ENCODE measurements at regions of chr18 and their contacts with region 1.

Region 1: DNA sequence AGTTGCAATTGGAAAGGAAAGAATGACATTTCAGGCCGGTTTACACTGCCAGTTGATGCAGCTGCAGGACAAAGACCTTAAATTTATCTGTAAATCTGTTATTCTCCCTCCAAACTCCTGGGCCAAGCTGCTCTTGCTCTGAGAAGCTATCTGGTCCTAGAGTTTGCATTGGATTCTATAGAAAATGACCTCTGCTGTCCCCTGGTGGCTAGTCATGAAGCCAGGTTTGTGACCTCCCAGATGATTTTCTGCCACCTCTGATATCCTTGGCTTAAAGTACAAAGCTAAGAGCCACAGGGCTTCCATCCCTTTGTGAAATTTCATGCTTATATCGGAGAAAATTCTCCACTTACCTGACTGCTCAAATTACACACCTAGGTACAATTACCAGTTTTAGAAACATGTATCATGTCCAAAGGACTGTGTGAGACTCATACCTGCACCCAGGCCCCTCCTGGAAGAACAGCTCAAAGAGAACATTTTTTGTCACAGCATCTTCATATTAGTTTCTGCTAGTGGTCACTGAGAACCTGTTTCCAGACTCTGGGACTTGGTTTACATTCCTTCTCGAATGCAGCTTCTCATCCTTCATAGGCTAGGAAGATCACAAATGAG is 28.9 kb upstream of the IER3IP1 start:
- DNase-seq: peak; percentile 18 to 33
- ATAC-seq: peak; percentile 64 to 81; a peak in 5 of 6 replicates
- H3K4me3 ChIP-seq: no peak overlapping the region
- H3K27ac ChIP-seq: no peak overlapping the region
- H3K4me1 ChIP-seq: no peaks in the 10 kb centered on the region
- CTCF ChIP-seq: peak; percentile 65
- EP300 ChIP-seq: no peak
- POLR2A ChIP-seq: no peak
- RAD21 ChIP-seq: peak; percentile 58 to 60

Region 2: GRCh38 chr18:47050468-47050867 is 154.5 kb before region 1 on chr18:
- CTCF ChIA-PET with region 1: interaction called, 14 read pairs
- POLR2A ChIA-PET with region 1: no interaction called
- DNase-seq: peak in 1 of 2 experiments; percentile 50
- ATAC-seq: peak; percentile 56 to 62; a peak in 2 of 6 replicates
- H3K4me3 ChIP-seq: no peak overlapping the region
- H3K27ac ChIP-seq: no peak overlapping the region
- H3K4me1 ChIP-seq: no peaks in the 10 kb centered on the region
- CTCF ChIP-seq: peak; percentile 50
- EP300 ChIP-seq: no peak
- POLR2A ChIP-seq: no peak
- RAD21 ChIP-seq: peak; percentile 56 to 57

Region 3: GRCh38 chr18:47100214-47100831 is 104.7 kb before region 1 on chr18:
- CTCF ChIA-PET with region 1: interaction called, 36 read pairs
- POLR2A ChIA-PET with region 1: no interaction called
- DNase-seq: peak; percentile 22 to 31
- ATAC-seq: peak; percentile 77 to 86; a peak in 5 of 6 replicates
- H3K4me3 ChIP-seq: no peak overlapping the region
- H3K27ac ChIP-seq: no peak overlapping the region
- H3K4me1 ChIP-seq: no peaks in the 10 kb centered on the region
- CTCF ChIP-seq: peak; percentile 66
- EP300 ChIP-seq: no peak
- POLR2A ChIP-seq: no peak
- RAD21 ChIP-seq: peak; percentile 63 to 64

Region 4: GRCh38 chr18:47113796-47114540 is 91.0 kb before region 1 on chr18:
- CTCF ChIA-PET with region 1: interaction called, 16 read pairs
- POLR2A ChIA-PET with region 1: no interaction called
- DNase-seq: no peak
- ATAC-seq: no peak
- H3K4me3 ChIP-seq: no peak overlapping the region
- H3K27ac ChIP-seq: no peak overlapping the region
- H3K4me1 ChIP-seq: no peaks in the 10 kb centered on the region
- CTCF ChIP-seq: no peak
- EP300 ChIP-seq: no peak
- POLR2A ChIP-seq: no peak
- RAD21 ChIP-seq: no peak

Region 5: DNA sequence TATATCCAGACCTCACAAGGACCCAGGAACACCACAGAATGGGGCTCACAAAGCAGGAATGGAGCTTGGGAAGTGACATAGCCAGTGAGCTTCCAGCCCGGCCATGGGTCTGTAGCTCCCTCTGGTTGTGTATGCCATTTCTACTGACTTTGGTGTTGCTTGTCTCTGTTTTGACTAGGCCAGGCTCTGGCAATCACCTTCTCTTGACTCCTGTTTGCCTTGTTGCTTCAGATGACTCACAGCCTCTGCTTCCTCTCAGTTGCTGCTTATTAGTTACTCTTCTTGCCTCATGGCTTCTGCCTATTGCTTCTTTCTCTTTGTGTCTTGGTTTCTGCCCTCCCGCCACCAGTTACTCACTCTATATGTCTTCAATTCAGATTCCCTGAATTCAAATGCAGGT is 13.1 kb before region 1 on chr18:
- CTCF ChIA-PET with region 1: interaction called, 11 read pairs
- POLR2A ChIA-PET with region 1: no interaction called
- DNase-seq: peak in 1 of 2 experiments; percentile 24
- ATAC-seq: peak in 1 of 2 experiments; percentile 30; a peak in 5 of 6 replicates
- H3K4me3 ChIP-seq: no peak overlapping the region
- H3K27ac ChIP-seq: no peak overlapping the region
- H3K4me1 ChIP-seq: no peaks in the 10 kb centered on the region
- CTCF ChIP-seq: no peak
- EP300 ChIP-seq: no peak
- POLR2A ChIP-seq: no peak
- RAD21 ChIP-seq: no peak

Region 6: GRCh38 chr18:47215554-47216138 is 10.6 kb after region 1 on chr18:
- CTCF ChIA-PET with region 1: interaction called, 32 read pairs
- POLR2A ChIA-PET with region 1: no interaction called
- DNase-seq: peak; percentile 11 to 64
- ATAC-seq: peak; percentile 74 to 80; a peak in 4 of 6 replicates
- H3K4me3 ChIP-seq: no peak overlapping the region
- H3K27ac ChIP-seq: no peak overlapping the region
- H3K4me1 ChIP-seq: no peaks in the 10 kb centered on the region
- CTCF ChIP-seq: peak; percentile 53
- EP300 ChIP-seq: no peak
- POLR2A ChIP-seq: no peak
- RAD21 ChIP-seq: peak; percentile 70 to 75

Region 7: GRCh38 chr18:47756364-47757016 is 551.5 kb after region 1 on chr18:
- CTCF ChIA-PET with region 1: interaction called, 10 read pairs
- POLR2A ChIA-PET with region 1: no interaction called
- DNase-seq: peak; percentile 31 to 64
- ATAC-seq: peak; percentile 72 to 88
- H3K4me3 ChIP-seq: no peak overlapping the region
- H3K27ac ChIP-seq: no peak overlapping the region
- H3K4me1 ChIP-seq: no peaks in the 10 kb centered on the region
- CTCF ChIP-seq: peak; percentile 58
- EP300 ChIP-seq: no peak
- POLR2A ChIP-seq: no peak
- RAD21 ChIP-seq: peak; percentile 46 to 67; a peak in 4 of 5 replicates